Dorsolateral prefrontal cortex (tissue), 120 donors: ENCODE measurements at regions of chr7 and their contacts with region 1.

Region 1: DNA sequence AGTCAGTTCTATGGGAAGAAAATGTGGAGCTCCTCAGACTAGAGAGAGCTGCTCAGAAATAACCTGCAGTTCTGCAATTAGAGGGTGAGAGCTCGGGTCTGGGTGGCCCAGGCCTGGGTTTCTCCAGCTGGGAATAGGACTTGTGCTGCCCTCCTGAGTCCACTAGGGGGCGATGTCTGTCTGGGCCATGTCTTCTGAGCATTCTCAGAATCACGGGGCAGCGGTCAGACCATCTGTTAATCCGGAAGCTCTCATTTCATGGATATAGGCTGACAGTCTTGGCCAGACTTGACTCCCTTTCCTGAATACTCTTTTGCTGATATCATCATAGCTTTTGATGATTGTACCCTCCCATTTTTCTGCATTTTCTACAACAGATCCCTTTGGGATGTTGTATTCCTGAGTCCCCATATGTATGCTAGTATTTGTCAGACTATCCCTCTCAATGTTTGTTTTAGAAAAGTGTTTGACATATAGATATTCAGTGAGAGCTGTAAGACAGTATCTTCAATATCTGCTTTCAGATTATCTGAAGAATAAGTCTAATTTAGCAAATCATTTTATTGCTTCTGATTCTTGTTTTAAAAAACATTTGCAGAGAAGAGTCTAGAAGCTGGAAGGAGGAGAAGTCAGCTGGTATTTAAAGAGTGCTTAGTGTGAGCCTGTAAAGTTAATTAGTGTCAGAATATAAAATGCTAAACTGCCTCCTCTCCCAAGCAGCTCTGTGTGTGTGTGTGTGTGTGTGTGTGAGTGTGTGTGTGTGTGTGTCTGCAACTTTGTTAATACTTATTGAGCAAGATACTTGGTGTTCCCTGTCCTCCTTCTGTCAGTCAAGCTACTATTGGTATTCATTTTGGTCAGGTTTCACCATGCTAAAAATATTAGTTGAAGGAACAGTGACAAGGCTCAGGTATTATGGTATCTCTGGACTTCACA is 38.0 kb downstream of the STARD3NL start:
- DNase-seq: peak; percentile 64 to 87 (median 74)
- H3K4me3 ChIP-seq: peak overlapping the region in 4 of 59 donors; percentile 6 to 33 (median 14)
- H3K27ac ChIP-seq: peak overlapping the region in 27 of 59 donors; percentile 0 to 59 (median 30)
- H3K27me3 ChIP-seq: no peaks in the 10 kb centered on the region
- CTCF ChIP-seq: peak; percentile 86 to 99 (median 95)

Region 2: DNA sequence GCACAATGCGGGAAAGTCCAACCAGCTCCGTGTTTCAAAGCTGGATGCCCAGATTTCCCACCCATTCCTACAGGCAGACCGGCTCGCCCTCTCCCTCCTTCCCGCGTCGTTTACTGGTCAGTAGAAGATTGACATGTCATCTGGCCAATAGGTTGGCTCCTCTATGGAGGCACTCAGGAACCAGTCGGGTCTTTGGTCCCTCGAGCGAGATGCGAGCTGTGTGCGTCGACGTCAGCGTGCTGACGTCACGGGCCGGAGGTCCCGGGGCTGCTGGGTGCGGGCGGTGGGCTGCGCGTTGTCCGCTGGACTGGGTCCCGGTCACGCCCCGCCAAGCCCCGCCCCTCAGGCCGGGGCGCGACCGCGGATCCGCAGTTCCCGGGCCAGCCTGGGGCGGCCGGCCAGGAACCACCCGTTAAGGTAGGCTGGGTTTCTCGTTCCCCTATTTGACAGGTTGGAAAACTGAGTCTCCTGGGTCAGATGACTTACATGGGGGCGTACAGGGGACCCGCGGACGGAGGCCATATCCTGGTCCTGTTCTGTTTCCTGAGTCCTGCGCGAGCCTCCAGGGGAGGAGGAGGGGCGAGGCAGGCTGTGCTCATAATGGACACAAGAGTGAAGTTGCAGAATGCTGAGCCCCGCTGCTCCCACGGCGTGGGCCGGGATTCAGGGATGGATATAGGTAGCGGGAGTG is 37.9 kb before region 1 on chr7 and contains the start of gene STARD3NL:
- intact Hi-C with region 1: loop called (anchors 2 to 5 kb)
- DNase-seq: peak; percentile 80 to 99 (median 97)
- H3K4me3 ChIP-seq: peak within 1 kb of the TSS; percentile 63 to 97 (median 90)
- H3K27ac ChIP-seq: peak within 1 kb of the TSS; percentile 51 to 97 (median 87)
- H3K27me3 ChIP-seq: no peaks in the 10 kb centered on the region
- CTCF ChIP-seq: peak in 23 of 56 donors; percentile 3 to 37 (median 12)
- total RNA-seq, gene STARD3NL: 30.1 to 55.9 (median 39.6) TPM

Region 3: DNA sequence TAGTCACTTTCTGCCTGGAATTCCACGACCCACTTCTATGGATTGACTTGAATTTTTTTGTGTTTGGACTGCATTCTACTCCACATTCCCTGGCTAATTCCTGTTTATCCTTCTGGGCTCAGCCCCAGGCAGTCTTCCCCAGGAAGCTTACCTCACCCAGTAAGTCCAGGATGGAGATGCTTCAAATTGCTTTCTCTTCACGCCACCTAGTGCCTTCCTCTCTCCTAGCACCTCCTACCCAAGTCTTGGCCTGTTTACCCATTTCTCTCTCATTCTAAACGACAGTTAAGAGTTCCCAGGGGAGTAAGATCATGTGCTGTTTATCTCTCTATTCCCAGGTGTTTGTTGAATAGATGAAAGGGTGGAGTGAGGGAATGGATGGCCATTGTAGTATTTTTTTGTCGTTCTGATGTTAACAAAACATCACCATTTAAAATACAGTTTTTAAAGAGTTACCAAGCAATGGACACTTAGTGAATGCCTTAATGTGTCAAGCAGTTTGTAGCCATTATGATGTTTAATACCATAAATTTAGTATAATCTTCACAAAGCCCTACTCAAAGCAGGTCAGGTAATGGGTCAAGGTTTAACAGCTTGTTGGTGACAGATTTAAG is 102.9 kb after region 1 on chr7:
- intact Hi-C with region 1: loop called in 1 of 2 experiments (anchors 2 kb)
- DNase-seq: peak in 2 of 10 donors; percentile 38 to 55
- H3K4me3 ChIP-seq: no peak overlapping the region
- H3K27ac ChIP-seq: no peak overlapping the region
- H3K27me3 ChIP-seq: no peaks in the 10 kb centered on the region
- CTCF ChIP-seq: peak in 55 of 56 donors; percentile 25 to 79 (median 60)

Region 4: DNA sequence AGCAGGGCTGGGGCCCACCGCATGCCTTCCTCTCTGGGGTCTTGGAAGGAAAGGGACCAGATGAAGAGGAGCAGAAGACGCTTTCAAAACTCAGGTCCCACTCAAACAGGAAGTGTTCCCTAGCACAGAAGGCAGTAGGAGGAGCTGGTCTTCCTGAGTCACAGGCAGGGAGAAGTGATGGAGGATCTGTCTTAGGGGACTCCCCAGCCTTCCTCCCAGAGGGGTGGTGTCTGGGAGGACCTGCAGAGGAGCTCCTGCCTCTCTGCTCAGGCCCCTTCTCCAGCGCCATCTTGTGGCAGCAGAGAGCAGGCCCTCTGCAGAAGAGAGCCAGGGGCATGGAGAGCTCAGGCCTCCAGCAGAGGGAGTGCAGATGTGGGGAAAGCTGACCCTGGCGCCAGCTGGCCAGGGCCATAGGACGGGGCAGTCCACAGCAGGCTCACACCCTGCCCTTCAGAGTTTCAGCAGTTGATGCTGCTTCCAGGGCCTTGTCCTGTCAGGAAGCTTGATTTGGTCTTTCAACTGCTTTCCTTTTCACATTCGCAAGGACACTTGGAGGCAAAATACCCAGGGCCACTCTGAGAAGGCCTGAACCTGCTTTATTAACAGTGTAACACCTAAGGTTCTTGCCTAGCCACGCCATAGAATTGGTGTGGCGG is 119.6 kb after region 1 on chr7:
- intact Hi-C with region 1: loop called (anchors 1 to 10 kb)
- DNase-seq: peak; percentile 26 to 86 (median 71)
- H3K4me3 ChIP-seq: peak overlapping the region in 8 of 59 donors; percentile 4 to 26 (median 15)
- H3K27ac ChIP-seq: peak overlapping the region in 11 of 59 donors; percentile 6 to 63 (median 31)
- H3K27me3 ChIP-seq: no peaks in the 10 kb centered on the region
- CTCF ChIP-seq: peak in 54 of 56 donors; percentile 63 to 99 (median 88)